Sigmoid colon (tissue), 7 donors: ENCODE measurements at regions of chr22 and their contacts with region 1.

Region 1: DNA sequence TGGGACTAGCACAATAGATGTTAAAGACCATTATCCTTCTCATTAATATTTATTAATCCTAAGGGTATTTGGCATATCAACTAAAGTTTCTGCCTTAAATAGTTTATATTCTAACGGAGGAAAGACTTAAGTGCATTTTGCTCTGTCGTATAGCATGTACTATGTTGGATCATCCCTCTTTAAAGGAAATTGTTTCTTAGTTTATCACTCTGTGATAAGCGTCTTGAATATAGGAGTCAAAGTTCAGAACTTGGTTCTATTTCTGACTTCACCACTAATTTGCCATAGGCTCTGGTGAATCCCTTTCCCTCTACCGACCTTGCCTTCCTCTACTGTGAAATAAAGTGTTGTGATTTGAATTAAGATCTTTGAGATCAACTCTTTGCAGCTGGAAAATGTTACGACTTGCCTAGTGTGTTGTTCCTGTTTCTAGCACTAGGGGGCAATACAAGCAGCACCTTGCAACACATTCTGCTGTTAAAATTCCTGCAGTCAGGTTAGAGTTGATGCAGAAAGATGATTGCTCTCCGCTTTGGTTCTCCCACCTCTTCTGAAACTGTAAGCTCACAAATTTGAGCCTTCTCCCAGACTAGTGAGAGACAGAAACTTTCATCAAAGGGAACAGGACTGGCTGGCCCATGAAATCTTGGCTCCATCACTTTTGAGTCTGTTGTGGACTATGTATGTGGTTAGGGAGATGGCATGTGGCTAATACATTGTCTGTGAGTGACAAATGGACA is 27.8 kb upstream of the ZNRF3 start:
- DNase-seq: peak; percentile 68
- H3K4me3 ChIP-seq: no peak overlapping the region
- H3K27ac ChIP-seq: no peak overlapping the region
- H3K4me1 ChIP-seq: peaks cover 0 to 7% (median 3%) of the 10 kb centered on the region in 4 donors
- H3K27me3 ChIP-seq: no peaks in the 10 kb centered on the region
- CTCF ChIP-seq: peak; percentile 88 to 97 (median 94)
- EP300 ChIP-seq: no peak
- POLR2A ChIP-seq: no peak

Region 2: DNA sequence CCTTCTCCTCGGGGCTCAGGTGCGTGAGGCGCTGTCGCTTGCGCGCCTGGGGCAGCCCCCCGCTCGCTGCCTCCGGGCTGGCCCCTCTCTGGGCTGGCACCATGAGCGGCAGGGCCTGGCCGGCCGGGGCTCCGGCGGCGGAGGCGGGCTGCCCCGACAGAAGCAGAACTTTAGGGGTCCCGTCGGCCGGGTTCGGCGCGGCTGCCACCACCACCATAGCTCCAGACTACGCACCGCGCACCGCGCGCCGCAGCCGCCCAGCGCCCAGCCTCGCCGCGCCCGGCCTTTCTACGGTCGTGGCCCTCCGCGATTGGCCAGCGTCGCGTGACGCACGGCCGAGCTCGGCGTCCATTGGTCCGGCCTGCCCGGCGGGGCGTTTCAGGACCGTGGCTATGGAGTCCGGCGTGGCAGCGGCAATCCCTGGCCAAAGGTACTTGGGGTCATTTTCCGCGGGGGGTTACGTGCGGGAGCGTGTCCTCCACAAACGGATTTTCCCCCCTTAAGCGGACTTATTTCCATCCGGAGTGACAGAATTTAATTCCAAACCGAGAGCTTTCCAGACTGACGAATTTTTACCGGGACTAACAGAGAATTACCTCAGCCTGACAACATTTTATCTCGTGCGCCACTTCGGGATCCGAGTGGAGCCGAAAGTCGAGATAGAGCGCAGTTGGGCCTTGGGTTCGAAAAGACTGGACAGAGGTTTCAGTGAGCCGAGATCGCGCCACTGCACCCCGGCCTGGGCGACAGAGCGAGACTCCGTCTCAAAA is 55.0 kb before region 1 on chr22 and contains the start of gene XBP1:
- intact Hi-C with region 1: no loop called
- DNase-seq: peak; percentile 97
- H3K4me3 ChIP-seq: peak within 1 kb of the TSS; percentile 74 to 100 (median 87)
- H3K27ac ChIP-seq: peak within 1 kb of the TSS; percentile 96 to 100 (median 100)
- H3K4me1 ChIP-seq: peaks cover 0 to 56% (median 46%) of the 10 kb centered on the region in 4 donors
- H3K27me3 ChIP-seq: no peaks in the 10 kb centered on the region
- CTCF ChIP-seq: no peak
- EP300 ChIP-seq: no peak
- POLR2A ChIP-seq: peak; percentile 79 to 91
- total RNA-seq, gene XBP1: 76.7 to 126 (median 106) TPM

Region 3: DNA sequence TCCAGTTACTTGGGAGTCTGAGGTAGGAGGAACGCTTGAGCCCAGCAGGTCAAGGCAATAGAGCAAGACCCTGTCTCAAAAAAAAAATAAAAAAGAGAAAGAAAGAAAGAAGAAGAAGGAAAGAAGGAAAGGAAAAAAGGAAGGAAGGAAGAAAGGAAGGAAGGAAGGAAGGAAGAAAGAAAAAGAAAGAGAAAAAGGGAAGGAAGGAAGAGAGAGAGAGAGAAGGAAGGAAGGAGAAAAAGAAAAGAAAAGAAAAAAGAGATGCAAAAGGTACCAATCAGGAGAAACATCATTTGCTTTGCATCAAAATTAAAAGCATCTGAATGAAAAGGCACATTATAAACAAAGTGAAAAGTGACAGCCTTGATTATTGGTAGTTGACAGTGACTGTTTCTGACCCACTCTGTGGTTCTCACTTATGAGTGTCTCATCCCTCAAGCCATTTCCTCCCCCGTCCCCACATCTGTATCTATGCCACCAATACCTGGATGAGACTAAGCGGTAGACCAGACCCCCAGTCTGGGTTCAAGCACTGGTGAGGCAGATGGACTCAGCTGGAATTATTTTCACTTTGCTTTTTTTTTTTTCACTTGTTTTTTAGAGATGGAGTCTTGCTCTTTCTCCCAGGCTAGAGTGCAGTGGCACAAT is 22.1 kb before region 1 on chr22:
- intact Hi-C with region 1: no loop called
- DNase-seq: no peak
- H3K4me3 ChIP-seq: no peak overlapping the region
- H3K27ac ChIP-seq: no peak overlapping the region
- H3K4me1 ChIP-seq: peaks cover 0 to 12% (median 4%) of the 10 kb centered on the region in 4 donors
- H3K27me3 ChIP-seq: no peaks in the 10 kb centered on the region
- CTCF ChIP-seq: no peak
- EP300 ChIP-seq: no peak
- POLR2A ChIP-seq: no peak

Region 4: DNA sequence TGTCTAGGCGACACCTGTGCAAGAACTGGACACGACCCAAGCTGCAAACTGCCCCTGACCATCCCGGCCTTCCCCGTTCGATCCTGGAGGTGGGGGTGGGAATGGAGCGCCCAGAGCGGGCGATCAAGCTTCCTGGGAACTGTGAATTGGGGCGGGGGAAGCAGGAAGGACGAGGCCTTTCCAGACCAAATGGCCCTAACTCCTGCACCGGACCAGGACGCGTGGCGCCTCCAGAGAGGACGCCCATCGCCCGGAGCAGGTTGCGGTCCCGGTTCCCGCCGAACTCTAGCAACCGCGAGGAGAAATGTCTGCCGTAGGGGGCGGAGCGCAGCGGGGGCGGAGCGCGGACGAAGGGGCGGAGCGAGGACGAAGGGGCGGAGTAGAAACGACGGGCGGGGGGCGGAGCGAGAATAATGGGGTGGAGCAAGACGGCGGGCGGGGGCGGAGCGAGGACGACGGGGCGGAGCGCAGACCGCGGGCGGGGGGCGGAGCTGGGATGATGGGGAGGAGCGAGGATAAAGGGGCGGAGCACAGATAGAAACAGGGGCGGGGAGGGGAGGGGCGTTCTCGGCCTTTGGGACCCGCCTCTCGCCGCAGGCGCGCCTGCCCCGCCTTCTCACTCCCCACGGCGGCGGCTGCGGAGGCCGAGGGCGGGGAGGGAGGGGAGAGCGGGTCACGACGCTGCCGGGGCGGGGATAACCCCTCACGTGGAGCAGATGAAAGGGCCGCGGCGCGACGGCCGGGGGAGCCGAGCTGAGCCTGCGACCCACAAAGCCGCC is 27.5 kb after region 1 on chr22 and contains the start of gene ZNRF3:
- intact Hi-C with region 1: loop called (anchors 1 kb)
- DNase-seq: peak; percentile 97
- H3K4me3 ChIP-seq: peak within 1 kb of the TSS; percentile 49 to 71 (median 64)
- H3K27ac ChIP-seq: peak within 1 kb of the TSS; percentile 77 to 87 (median 80)
- H3K4me1 ChIP-seq: peaks cover 0 to 46% (median 36%) of the 10 kb centered on the region in 4 donors
- H3K27me3 ChIP-seq: no peaks in the 10 kb centered on the region
- CTCF ChIP-seq: no peak
- EP300 ChIP-seq: no peak
- POLR2A ChIP-seq: no peak
- total RNA-seq, gene ZNRF3: 8.9 to 13.6 (median 9.7) TPM

Region 5: GRCh38 chr22:29040385-29041275 is 185.1 kb after region 1 on chr22:
- intact Hi-C with region 1: loop called (anchors 1 kb)
- DNase-seq: peak; percentile 81
- H3K4me3 ChIP-seq: no peak overlapping the region
- H3K27ac ChIP-seq: no peak overlapping the region
- H3K4me1 ChIP-seq: peaks cover 0 to 21% (median 15%) of the 10 kb centered on the region in 4 donors
- H3K27me3 ChIP-seq: no peaks in the 10 kb centered on the region
- CTCF ChIP-seq: peak; percentile 87 to 97 (median 94)
- EP300 ChIP-seq: no peak
- POLR2A ChIP-seq: no peak

Region 6: DNA sequence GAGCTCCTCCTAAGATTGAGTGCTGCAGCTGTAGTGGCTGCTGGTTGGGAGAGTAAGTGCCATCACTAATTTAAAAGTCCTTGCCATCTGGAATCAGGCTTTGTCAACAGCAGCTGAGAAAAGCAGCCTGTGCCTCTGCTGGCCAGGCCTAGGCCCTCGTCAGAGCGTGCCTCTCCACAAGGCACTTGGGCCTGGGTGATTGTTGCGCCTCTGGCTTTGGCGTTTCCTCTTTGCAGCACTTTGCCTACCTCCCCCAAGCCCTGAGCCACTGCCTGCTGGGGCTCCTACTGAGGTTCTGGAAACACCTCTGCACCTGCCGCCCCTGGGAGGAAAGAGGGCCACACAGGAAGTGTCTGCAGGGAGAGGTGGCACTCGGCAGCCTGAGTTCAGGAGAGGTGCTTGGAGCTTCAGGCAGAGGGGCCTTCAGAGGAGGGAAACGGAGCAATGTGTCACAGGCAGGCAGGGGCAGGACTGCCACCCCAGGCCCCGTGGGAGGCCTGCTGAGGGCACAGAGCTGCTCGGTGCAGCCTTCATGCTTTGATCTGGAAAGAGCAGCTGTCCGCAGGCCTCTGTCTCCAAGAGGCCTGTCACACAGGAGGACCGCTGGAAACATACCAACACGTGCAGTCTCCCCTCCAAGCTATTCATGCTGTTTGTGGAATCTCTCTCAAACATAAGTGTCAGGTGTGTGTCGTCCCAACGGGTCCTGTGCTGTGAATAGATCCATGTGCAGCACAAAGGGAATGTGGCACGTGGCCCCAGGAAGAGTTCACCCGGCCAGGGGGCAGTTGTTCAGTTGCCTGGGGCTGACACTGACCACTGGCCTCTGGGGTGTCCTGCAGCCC is 288.6 kb after region 1 on chr22:
- intact Hi-C with region 1: no loop called
- DNase-seq: peak; percentile 53
- H3K4me3 ChIP-seq: no peak overlapping the region
- H3K27ac ChIP-seq: no peak overlapping the region
- H3K4me1 ChIP-seq: no peaks in the 10 kb centered on the region
- H3K27me3 ChIP-seq: no peaks in the 10 kb centered on the region
- CTCF ChIP-seq: no peak
- EP300 ChIP-seq: no peak
- POLR2A ChIP-seq: no peak